Tibial artery (tissue), 4 donors: ENCODE measurements at regions of chr10 and their contacts with region 1.

Region 1: DNA sequence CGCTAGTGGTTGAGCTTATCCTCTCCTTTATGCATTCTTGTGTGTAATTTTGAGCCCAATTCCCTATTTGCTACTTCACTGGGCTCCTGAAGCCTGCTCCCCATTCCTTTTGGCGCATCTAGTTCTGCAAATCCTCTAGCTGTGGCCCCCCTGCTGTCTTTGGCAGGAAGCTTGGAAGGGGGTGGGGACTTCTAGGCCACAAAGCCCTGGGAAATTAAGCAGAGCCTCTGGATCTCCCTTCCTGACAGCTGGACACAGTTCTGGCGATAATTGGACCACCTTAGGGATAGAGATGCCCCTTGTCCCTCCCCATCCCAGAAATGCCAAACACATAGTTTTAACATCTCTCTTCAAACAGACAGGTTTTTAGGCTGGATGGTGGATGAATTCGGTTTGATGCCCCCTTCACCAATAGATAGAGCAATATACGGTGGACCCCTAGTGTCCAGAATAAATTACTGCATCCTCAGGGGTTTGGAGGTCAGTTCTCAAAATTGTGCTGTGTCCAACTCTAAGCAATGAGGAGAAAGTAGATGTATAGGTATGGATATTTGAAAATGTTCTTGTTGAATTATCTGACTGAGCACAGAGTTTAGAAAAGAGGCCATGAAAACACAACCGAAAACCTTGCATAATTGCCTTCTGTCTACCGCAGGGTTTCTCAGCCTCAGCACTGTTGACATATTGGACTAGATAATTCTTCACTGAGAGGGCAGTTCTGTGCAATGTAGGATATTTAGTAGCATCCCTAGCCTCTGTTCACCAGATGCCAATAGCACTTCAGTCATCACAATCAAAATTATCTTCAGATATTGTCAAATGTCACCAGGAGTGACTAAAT is 75.5 kb downstream of the PAPSS2 start:
- DNase-seq: no peak
- H3K4me3 ChIP-seq: no peak overlapping the region
- H3K27ac ChIP-seq: no peak overlapping the region
- H3K4me1 ChIP-seq: peaks cover 0 to 6% (median 3%) of the 10 kb centered on the region in 4 donors
- H3K27me3 ChIP-seq: no peaks in the 10 kb centered on the region
- CTCF ChIP-seq: peak; percentile 69 to 85

Region 2: DNA sequence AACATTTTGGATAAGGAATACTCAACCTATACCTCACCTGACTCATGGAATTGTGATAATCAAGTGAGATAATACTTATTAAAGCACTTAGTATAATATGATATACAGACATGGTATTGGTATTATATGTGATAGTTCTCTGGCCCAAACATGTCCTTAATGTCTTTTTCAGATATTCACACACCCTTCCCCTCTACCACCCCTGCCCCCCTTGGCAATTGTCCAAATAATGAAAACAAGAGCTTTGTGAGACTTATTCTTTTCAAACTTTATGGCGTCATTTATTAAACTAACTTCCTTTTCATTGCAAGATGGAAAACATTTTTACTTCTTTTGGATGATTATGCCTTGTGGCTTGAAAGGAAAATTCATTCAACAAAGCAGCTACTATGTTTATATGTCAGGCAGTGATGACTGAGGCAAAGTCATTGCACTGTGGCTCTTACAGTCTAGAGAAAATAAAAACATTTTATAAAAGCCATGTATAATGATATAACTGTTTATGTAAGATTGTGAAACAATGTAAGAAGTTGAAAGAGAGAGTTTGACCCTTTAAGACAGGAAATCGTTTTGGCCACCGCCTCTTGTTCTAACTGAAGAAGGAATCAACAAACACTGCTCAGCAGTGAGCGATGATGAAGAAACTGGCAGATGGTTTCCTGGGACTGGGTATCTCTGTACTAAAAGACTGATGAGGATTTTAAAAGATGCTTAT is 203.1 kb before region 1 on chr10:
- intact Hi-C with region 1: loop called (anchors 2 kb)
- DNase-seq: peak in 1 of 2 donors; percentile 73
- H3K4me3 ChIP-seq: peak overlapping the region in 1 of 2 donors; percentile 15
- H3K27ac ChIP-seq: peak overlapping the region; percentile 46 to 57
- H3K4me1 ChIP-seq: peaks cover 0 to 24% (median 4%) of the 10 kb centered on the region in 4 donors
- H3K27me3 ChIP-seq: no peaks in the 10 kb centered on the region
- CTCF ChIP-seq: no peak

Region 3: GRCh38 chr10:87659571-87660483 is 75.4 kb before region 1 on chr10 and contains the start of gene PAPSS2:
- intact Hi-C with region 1: loop called (anchors 5 kb)
- DNase-seq: peak; percentile 70 to 81
- H3K4me3 ChIP-seq: peak within 1 kb of the TSS; percentile 85 to 96
- H3K27ac ChIP-seq: peak within 1 kb of the TSS; percentile 81 to 88
- H3K4me1 ChIP-seq: peaks cover 0 to 39% (median 14%) of the 10 kb centered on the region in 4 donors
- H3K27me3 ChIP-seq: no peaks in the 10 kb centered on the region
- CTCF ChIP-seq: no peak

Region 4: DNA sequence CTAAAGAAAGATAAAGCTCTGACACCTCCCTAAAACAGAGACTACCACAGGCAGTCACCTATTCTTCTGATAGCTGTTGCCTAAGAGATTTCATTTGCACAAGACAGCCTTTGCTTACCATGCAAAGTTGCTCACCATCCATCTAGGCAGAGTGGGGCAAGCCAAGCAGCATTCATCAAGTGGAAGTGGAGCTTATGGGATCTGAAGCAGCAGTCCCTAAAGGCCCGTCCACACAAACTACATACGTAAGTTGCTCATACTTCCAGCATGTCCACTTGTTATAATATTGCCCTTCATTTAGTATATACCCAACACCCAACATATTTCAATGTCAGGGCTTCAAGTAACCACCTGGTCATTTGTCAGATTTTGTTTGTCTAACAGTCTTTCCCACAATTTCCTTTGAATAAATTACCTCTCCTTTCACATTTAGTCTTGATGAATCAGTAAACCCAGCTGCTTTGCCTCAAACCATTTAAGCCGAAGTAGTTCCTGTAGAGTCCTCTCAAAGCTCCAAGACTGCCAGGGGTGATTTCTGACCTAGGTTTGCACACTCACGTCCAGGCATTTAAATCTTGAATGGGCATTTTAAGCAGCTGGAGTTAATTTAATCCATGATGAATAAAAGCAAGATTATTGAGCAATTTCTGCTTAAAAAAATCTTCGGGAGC is 14.9 kb after region 1 on chr10:
- intact Hi-C with region 1: no loop called
- DNase-seq: no peak
- H3K4me3 ChIP-seq: no peak overlapping the region
- H3K27ac ChIP-seq: no peak overlapping the region
- H3K4me1 ChIP-seq: no peaks in the 10 kb centered on the region
- H3K27me3 ChIP-seq: no peaks in the 10 kb centered on the region
- CTCF ChIP-seq: no peak